ENCODE measurements at regions of chr2 and their contacts with region 1.

Region 1: DNA sequence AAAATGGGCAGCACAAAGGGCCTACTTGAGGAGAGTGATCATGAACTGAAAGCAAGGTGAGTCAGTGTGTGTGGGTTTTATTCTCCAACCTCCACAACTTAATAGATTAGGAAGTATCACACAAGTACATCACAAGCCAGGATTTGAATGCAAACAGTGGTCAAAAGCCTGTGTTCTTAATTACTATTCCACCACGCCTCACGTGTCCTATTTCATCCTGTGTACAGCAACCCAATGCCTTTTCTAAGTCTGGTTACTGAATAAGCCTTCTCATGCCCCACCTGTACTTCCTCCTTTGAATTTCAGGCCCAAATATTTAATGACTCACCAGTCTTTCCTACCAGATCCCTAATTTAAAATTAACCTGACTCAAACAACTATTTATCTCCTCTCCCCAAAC is 755.7 kb upstream of the SLC8A1 start:
- DNase-seq: no peak
- H3K4me3 ChIP-seq: no peak overlapping the region
- H3K27ac ChIP-seq: no peak overlapping the region
- H3K4me1 ChIP-seq: no peaks in the 10 kb centered on the region
- H3K27me3 ChIP-seq: no peaks in the 10 kb centered on the region
- CTCF ChIP-seq: no peak
- EP300 ChIP-seq: no peak
- POLR2A ChIP-seq: no peak

Region 2: DNA sequence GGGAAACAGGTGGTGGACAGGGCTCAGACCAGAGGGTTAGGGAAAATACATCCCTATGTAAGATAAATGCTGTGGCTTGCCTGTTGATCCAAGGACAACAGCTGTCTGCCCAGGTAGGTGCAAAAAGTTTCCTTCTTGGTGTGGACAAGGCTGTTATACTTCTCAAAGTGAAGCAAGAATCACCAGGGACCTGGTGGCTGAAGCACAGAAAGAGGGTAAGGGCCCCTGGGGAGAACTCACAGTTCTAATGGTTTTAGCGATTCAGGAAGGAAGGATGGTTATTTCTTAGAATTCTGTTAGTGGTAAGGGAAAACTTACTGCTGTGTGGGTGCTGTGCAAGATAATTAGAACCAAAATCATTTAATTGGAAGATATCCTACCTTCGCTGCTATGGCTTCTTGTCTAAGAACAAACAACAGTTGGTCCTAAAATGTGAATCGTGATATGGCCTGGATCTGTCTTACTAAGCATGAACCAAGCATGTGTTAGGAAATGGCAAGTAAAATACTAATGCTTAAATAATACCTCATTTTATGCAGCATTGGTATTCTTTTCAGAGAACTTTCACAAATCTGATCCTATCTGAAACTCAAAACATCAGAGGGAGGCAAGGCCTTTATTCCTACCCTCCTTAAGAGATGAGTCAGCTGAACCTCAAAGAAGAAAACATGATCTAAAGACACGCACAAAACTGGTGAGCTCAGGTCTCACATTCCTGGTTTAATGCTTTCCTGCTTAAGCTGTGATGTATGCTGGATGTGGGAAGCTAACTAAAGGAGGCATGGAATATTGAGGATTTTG is 1269.3 kb before region 1 on chr2:
- intact Hi-C with region 1: loop called in 1 of 4 experiments (anchors 5 kb)
- DNase-seq: no peak
- H3K4me3 ChIP-seq: no peak overlapping the region
- H3K27ac ChIP-seq: no peak overlapping the region
- H3K4me1 ChIP-seq: no peaks in the 10 kb centered on the region
- H3K27me3 ChIP-seq: no peaks in the 10 kb centered on the region
- CTCF ChIP-seq: no peak
- EP300 ChIP-seq: no peak
- POLR2A ChIP-seq: no peak

Region 3: DNA sequence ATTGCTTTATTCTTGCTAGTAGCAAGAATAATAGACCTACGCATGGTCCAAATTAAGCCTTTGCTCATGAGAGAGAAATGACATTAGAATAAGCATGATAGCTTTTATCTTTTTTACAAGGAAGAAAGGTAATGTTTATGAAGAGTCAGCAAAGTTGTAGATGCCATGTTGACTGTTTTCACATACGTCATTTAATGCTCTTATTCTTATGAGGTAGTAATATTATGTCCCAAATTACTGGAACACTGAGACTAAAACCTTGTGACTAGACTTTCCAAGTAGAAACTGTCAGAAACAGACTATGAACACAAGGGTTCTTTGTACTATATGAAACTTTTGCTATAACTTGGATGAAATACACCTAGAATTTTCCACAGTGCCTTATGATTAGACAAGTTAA is 202.9 kb before region 1 on chr2:
- intact Hi-C with region 1: no loop called
- DNase-seq: no peak
- H3K4me3 ChIP-seq: no peak overlapping the region
- H3K27ac ChIP-seq: no peak overlapping the region
- H3K4me1 ChIP-seq: no peaks in the 10 kb centered on the region
- H3K27me3 ChIP-seq: no peaks in the 10 kb centered on the region
- CTCF ChIP-seq: no peak
- EP300 ChIP-seq: no peak
- POLR2A ChIP-seq: no peak

Region 4: DNA sequence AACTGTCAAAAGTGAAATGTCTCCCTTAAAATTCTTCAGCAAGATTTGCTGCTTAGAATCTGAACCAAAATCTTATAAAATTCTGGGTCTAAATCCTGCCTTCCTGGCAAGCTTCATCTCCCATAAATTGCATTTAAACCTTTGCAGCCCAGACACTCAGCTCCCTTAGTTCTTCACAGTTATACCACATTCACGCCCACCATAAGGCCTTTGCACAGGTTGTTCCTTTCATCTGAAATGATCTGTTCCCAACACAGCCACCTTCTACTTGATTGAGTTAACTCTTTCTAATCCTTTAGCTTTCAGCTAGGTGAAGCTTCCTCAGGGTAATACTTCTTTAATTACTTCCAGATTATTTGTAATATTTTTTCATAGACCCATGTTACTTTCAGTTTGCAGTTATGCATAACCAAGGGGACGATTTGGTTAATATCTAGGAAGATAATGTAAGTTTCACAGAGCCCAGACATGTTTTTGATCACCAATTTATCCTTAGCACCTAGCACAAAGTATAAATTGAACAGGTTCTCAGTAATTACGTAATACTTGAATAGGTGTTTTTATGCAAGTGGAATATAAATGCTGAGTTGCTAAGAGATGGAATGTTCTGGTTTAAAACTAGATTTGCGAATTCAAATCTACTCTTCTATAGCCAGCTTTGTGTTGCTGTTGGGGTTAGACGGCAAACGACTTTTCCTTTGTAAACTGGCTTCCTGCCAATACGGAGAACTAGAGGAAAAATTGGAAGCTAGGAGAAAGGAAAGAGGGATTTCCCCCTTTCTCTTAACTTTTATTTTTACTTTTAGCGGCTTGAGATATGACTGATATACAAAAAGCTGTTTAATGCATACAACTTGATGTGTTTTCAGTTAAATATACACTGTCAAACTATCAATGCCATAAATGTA is 60.6 kb after region 1 on chr2:
- intact Hi-C with region 1: no loop called
- DNase-seq: no peak
- H3K4me3 ChIP-seq: no peak overlapping the region
- H3K27ac ChIP-seq: no peak overlapping the region
- H3K4me1 ChIP-seq: peaks cover 1% of the 10 kb centered on the region
- H3K27me3 ChIP-seq: no peaks in the 10 kb centered on the region
- CTCF ChIP-seq: no peak
- EP300 ChIP-seq: no peak
- POLR2A ChIP-seq: no peak

Region 5: DNA sequence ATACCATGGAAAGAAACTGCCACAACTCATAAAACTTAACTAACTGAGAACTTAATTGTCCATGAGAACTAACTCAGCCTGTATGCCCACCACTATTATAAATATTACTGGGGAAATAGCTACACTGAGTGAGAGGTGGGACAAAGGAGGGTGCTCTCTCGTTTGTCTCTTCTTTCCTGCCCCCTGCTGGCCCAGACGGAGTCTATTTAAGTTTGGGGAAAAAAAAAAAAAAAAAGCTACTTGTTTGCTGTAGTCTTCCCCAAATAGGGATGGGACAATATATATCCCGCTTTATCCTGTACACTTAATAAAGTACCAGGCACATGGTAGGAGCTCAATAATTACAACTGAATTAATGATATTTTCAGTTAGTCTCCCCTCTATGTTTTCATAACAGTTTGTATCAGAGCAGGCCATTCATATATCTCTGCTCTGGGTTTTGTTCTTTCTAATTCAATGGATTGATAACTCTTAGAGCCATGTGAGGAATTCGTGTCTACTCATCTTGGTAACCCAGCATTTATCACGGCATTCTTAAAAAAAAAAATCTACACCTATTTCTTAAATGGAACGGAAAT is 192.6 kb after region 1 on chr2:
- intact Hi-C with region 1: no loop called
- DNase-seq: no peak
- H3K4me3 ChIP-seq: no peak overlapping the region
- H3K27ac ChIP-seq: no peak overlapping the region
- H3K4me1 ChIP-seq: no peaks in the 10 kb centered on the region
- H3K27me3 ChIP-seq: no peaks in the 10 kb centered on the region
- CTCF ChIP-seq: no peak
- EP300 ChIP-seq: no peak
- POLR2A ChIP-seq: no peak

Measured in ovary (tissue), 10 donors.